ENCODE measurements at regions of chr18 and their contacts with region 1.

Region 1: DNA sequence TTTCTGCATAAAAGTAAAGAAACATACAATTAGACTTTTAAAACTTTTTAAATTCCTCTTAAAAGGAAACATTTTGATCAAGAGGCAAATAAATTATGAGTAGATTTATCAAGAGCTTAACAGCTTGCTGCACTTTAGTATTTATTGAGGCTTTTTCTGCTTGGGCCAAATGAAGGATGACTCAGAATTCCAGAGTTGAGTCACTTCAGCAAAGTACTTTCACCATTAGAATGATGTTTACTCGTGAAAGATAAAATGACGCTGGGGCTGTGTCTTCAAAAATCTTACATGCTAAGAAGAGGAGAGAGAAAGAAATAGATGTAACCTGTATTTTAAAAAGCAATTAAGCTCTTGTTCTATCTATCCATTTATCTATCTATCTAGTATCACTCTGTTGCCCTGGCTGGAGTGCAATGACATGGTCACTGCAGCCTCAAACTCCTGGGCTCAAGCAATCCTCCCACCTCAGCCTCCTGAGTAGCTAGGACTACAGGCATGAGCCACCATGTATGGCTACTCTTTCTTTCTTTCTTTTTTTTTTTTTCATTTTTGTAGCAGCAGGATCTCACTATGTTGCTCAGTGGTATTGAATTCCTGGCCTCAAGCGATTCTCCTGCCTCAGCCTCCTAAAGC is 75.3 kb upstream of the RIOK3 start:
- DNase-seq: no peak
- ATAC-seq: peak; percentile 54

Region 2: DNA sequence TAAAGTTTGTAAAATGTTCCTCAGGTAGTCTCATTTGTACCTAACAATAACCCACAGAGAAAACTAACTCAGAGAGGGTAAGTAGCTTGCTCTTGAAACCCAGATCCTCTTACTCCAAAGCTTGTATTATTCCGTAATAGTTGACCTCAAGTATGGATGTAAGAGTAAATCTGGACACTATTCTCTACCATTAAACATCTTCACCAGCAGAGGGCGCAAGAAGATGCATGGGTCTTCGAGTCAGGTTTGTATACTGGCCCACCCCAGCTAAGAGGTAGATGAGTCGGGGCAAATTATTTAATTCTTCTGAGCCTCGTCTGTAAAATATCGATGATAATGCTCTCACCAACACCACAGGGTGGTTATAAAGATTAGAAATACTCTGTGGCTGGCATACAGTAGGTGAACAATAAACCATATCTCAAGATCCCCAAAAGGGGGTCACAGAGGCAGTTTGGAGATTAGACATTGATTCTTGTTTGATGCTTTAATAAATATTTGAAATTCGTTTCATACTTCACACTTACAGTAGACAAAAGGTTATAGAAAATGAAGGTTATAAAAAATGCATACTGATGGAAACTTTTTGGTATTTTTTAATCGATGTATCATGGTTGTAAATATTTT is 246.0 kb before region 1 on chr18:
- intact Hi-C with region 1: loop called (anchors 10 kb)
- DNase-seq: peak in 1 of 2 donors; percentile 64
- ATAC-seq: no peak

Region 3: DNA sequence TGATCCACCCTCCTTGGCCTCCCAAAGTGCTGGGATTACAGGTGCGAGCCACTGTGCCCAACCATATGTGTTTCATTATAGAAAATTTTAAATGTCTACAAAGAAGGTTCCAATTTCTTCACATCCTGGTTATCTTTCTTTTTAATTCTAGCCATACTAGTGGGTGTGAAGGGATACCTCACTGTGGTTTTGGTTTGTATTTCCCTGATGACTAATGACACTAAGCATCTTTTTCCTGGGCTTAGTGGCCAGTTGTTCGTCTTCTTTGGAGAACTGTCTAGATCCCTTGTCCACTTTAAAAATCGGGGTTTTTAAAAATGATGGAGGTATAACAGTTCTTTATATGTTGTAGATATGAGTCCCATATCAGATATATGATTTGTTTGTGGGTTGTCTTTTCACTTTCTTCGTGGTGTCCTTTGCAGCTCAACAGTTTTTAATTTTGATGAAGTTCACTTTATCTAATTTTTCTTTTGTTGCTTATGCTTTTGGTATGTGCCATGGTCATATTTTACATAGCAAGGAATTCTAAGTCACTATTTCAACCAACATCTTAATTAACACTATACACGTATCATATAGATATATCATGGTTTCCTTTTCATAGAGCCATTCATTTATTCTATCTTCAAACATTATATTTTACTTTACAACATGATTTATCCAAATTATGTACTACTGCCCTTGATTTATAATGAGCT is 59.7 kb before region 1 on chr18:
- intact Hi-C with region 1: no loop called
- DNase-seq: no peak
- ATAC-seq: no peak

Region 4: GRCh38 chr18:23337599-23338444 is 40.0 kb before region 1 on chr18:
- intact Hi-C with region 1: no loop called
- DNase-seq: no peak
- ATAC-seq: no peak